IMR-90 (cell line): ENCODE measurements at regions of chr14 and their contacts with region 1.

Region 1: GRCh38 chr14:44912041-44912869 is 49.5 kb downstream of the KLHL28 start:
- DNase-seq: no peak
- ATAC-seq: peak; percentile 30; the same call in 1 of the 2 replicates
- H3K4me3 ChIP-seq: peak overlapping the region; percentile 29; the same call in 1 of the 2 replicates
- H3K27ac ChIP-seq: no peak overlapping the region
- H3K4me1 ChIP-seq: 0 out of 2 replicates have a peak, but pooled peaks cover 1% of the 10 kb centered on the region
- H3K27me3 ChIP-seq: peaks cover 5% of the 10 kb centered on the region; the same call in 1 of the 2 replicates
- CTCF ChIP-seq: no peak
- POLR2A ChIP-seq: no peak
- RAD21 ChIP-seq: no peak

Region 2: DNA sequence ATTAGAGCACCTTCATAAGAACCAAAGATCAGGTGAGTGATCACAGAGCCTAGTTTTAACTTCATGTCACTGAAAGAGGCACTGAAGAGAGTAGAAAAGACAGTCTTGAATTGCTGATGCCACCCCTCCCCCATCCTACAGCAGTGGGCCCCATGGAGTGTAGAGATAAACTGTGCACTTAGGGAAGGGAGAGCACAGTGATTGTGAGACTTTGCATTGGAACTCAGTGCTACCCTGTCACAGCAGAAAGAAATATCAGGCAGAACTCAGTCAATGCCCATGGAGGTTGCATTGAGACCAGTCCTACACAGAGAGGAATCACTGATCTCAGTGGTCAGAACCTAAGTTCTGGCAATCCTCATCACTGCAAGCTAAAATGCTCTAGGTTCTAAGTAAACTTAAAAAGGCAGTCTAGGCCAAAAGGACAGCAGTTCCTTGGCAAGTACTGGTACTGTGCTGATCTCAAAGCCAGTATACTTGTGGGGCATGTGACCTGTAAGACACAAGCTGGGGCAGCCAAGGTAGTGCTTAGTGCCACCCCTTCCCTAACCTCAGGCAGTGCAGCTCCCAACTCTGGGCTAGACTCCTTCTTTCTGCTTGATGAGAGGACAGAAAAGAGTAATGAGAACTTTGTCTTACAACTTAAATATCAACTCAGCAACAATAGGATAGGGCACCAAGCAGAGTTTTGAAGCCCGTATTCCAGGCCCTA is 499.2 kb before region 1 on chr14:
- CTCF ChIA-PET with region 1: no interaction called
- POLR2A ChIA-PET with region 1: no interaction called
- dilution Hi-C with region 1: no loop called
- in situ Hi-C with region 1: no loop called
- intact Hi-C with region 1: no loop called
- DNase-seq: no peak
- ATAC-seq: no peak
- H3K4me3 ChIP-seq: no peak overlapping the region
- H3K27ac ChIP-seq: no peak overlapping the region
- H3K4me1 ChIP-seq: no peaks in the 10 kb centered on the region
- H3K27me3 ChIP-seq: no peaks in the 10 kb centered on the region
- CTCF ChIP-seq: no peak
- POLR2A ChIP-seq: no peak
- RAD21 ChIP-seq: no peak

Region 3: DNA sequence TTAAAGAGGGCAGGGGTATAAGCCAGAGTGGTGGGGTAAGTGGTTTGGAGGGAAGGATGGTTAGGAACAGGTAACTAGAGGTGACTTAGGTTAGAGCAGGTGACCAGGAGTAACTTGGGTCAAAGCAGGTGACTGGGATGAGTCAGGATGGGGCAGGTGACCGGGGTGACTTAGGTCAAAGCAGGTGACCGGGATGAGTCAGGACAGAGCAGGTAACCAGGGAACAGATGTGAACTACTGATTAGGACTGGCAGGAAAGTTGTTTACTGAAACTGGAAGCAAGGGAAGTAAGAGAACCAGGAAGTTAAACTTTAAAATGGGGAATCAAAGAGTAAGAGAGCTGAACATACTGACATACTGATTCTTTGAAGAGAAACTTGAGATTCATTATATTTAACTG is 462.6 kb before region 1 on chr14:
- CTCF ChIA-PET with region 1: no interaction called
- POLR2A ChIA-PET with region 1: no interaction called
- dilution Hi-C with region 1: no loop called
- in situ Hi-C with region 1: no loop called
- intact Hi-C with region 1: no loop called
- DNase-seq: no peak
- ATAC-seq: no peak
- H3K4me3 ChIP-seq: no peak overlapping the region
- H3K27ac ChIP-seq: no peak overlapping the region
- H3K4me1 ChIP-seq: no peaks in the 10 kb centered on the region
- H3K27me3 ChIP-seq: no peaks in the 10 kb centered on the region
- CTCF ChIP-seq: no peak
- POLR2A ChIP-seq: no peak
- RAD21 ChIP-seq: no peak

Region 4: GRCh38 chr14:45089813-45090212 is 177.6 kb after region 1 on chr14:
- CTCF ChIA-PET with region 1: no interaction called
- POLR2A ChIA-PET with region 1: no interaction called
- dilution Hi-C with region 1: no loop called
- in situ Hi-C with region 1: no loop called
- intact Hi-C with region 1: loop called (anchors 5 kb)
- DNase-seq: peak; percentile 61
- ATAC-seq: peak; percentile 52; the same call in 1 of the 2 replicates
- H3K4me3 ChIP-seq: no peak overlapping the region
- H3K27ac ChIP-seq: no peak overlapping the region
- H3K4me1 ChIP-seq: peaks cover 2% of the 10 kb centered on the region; the same call in 1 of the 2 replicates
- H3K27me3 ChIP-seq: no peaks in the 10 kb centered on the region
- CTCF ChIP-seq: no peak
- POLR2A ChIP-seq: no peak
- RAD21 ChIP-seq: no peak

Region 5: DNA sequence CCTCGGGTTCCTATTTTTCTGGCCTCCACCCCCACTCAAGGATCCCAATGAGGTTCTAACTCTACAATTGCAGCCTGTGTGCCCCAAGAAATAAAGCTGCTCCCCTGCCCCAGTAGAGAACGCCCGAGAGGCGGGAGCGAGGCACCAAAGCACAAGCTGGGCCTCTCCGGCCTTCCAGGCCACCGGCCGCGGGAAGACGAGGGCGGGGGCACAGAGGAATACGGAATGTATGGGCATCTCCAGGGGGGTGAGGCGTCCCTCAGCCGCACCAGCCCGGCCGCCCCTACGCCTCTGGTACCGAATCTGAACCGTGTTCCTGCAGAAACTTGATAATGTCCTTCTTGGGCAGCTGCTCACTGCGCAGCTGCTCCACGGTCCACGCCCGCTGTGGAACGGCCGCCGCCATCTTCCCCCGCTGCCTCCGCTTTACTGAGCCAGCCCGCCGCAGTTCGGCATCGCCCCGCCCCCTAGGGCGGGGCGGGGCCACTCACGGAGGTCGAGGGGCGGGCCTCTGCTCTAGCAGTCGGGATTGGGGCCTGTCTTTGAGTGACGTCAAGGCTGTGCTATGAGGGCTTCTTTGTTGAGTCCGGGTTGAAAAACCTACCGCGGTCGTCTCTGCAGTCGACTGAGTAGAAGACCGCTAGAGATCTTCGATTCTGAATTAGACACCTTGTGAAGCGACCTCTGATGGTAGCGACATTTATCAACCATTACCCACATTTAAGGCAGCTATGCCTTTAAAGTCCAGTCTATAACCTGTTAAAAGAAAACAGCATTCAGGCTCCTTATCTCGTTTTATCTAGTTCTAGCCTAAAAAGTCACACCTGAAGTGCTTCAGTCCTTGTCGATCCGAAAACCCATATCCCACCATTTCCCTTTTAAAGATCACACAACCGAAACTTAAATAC is 222.1 kb after region 1 on chr14 and contains the start of gene FKBP3:
- CTCF ChIA-PET with region 1: interaction called, 3 read pairs
- POLR2A ChIA-PET with region 1: no interaction called
- dilution Hi-C with region 1: no loop called
- in situ Hi-C with region 1: no loop called
- intact Hi-C with region 1: loop called (anchors 5 kb)
- DNase-seq: peak; percentile 99
- ATAC-seq: peak; percentile 96
- H3K4me3 ChIP-seq: peak within 1 kb of the TSS; percentile 91
- H3K27ac ChIP-seq: peak within 1 kb of the TSS; percentile 89
- H3K4me1 ChIP-seq: no peaks in the 10 kb centered on the region
- H3K27me3 ChIP-seq: no peaks in the 10 kb centered on the region
- CTCF ChIP-seq: 0 out of 2 replicates have a peak, but pooled peaks have one; percentile 16
- POLR2A ChIP-seq: peak; percentile 72
- RAD21 ChIP-seq: no peak; the same call in 1 of the 2 replicates
- total RNA-seq, gene FKBP3: 8.6 and 31.1 TPM in 2 replicates